ENCODE measurements at regions of chr21 and their contacts with region 1.

Region 1: GRCh38 chr21:31366825-31367224 is 22.8 kb upstream of the TIAM1 start:
- DNase-seq: peak; percentile 69
- ATAC-seq: peak; percentile 74
- H3K4me3 ChIP-seq: no peak overlapping the region
- H3K27ac ChIP-seq: no peak overlapping the region
- H3K4me1 ChIP-seq: no peaks in the 10 kb centered on the region
- H3K27me3 ChIP-seq: no peaks in the 10 kb centered on the region
- CTCF ChIP-seq: no peak

Region 2: DNA sequence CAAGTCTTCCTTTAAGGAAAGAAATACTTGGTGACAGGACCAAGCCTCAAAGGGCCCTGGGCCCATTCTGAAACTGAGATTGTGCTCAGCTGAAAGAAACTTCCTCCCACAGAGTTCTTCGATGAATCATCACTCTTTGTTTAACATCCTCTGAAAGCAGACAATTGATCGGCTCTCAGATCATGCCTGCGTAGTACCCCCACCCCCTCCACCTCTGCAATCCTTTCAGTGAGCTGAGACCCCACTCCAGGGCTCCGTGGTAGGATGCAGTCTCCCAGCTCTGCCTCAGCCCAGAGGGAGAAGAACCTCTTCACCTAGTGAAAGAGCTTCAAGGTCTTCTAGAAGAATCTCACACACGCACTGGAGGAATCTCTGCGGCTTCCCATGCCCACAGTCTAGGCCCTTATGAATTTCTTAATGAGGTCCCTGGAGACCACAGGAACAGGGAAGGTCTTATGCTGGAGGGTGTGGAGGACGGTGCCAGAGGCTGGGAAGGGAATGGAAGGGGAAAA is 187.7 kb after region 1 on chr21:
- CTCF ChIA-PET with region 1: no interaction called
- POLR2A ChIA-PET with region 1: interaction called, 11 read pairs
- in situ Hi-C with region 1: no loop called
- intact Hi-C with region 1: no loop called
- DNase-seq: no peak
- ATAC-seq: no peak
- H3K4me3 ChIP-seq: no peak overlapping the region
- H3K27ac ChIP-seq: no peak overlapping the region
- H3K4me1 ChIP-seq: no peaks in the 10 kb centered on the region; the same call in 1 of the 2 replicates
- H3K27me3 ChIP-seq: no peaks in the 10 kb centered on the region; the same call in 1 of the 2 replicates
- CTCF ChIP-seq: no peak